Calu3 (cell line): ENCODE measurements at regions of chr9 and their contacts with region 1.

Region 1: DNA sequence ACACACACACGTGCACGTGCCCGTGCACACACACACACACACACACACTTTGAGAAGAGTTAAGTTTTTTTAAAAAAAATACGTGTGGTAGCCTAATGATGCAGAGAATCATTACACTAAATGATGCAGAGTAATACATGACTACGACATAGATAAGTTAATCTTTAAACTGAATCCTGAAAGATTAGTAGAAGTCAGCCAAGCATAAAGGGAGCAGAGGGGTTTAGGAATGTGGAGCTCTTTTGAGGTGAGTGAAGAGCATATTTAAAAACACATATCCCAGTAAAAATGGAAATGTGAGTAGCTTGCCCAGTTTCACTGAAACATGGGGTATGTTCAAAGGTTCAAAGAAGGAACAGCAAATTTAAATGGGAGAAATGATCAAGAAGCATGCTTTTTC is 61.3 kb upstream of the TYRP1 start:
- DNase-seq: no peak
- H3K4me3 Mint-ChIP-seq: no peak overlapping the region
- H3K27ac Mint-ChIP-seq: no peak overlapping the region
- H3K4me1 Mint-ChIP-seq: peaks cover 9% of the 10 kb centered on the region
- H3K27me3 Mint-ChIP-seq: peaks cover 58% of the 10 kb centered on the region
- CTCF ChIP-seq: no peak

Region 2: GRCh38 chr9:12604164-12604821 is 27.6 kb before region 1 on chr9:
- CTCF ChIA-PET with region 1: no interaction called
- intact Hi-C with region 1: loop called (anchors 2 kb)
- DNase-seq: peak; percentile 8
- H3K4me3 Mint-ChIP-seq: no peak overlapping the region
- H3K27ac Mint-ChIP-seq: no peak overlapping the region
- H3K4me1 Mint-ChIP-seq: no peaks in the 10 kb centered on the region
- H3K27me3 Mint-ChIP-seq: no peaks in the 10 kb centered on the region
- CTCF ChIP-seq: no peak

Region 3: GRCh38 chr9:13291718-13292117 is 659.9 kb after region 1 on chr9:
- CTCF ChIA-PET with region 1: no interaction called
- intact Hi-C with region 1: no loop called
- DNase-seq: no peak
- H3K4me3 Mint-ChIP-seq: no peak overlapping the region
- H3K27ac Mint-ChIP-seq: no peak overlapping the region
- H3K4me1 Mint-ChIP-seq: no peaks in the 10 kb centered on the region
- H3K27me3 Mint-ChIP-seq: no peaks in the 10 kb centered on the region
- CTCF ChIP-seq: no peak